GM12878 (cell line): ENCODE measurements at regions of chr17 and their contacts with region 1.

Region 1: DNA sequence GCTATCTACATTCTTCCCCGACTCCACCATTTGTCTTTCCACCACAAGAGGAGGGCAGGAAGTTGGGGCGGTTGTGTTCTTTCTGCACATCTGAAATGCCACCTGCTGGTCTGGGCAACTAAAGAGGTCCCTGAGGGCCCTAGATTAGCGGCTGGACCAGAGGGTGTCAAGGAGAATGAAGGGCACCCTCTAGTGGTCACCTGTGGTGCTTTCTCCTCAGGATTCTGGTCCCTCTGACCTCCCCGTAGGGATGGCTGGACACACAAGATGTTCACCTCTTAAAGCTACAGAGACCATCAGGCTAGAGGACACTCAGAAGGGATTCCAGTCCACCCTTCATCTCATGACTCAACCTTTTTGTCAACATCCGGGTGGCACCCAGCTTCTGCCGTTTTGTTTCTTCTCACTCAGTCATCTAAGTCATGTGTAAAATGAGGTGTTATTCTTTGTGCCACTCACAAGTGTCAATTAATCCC is 2.9 kb upstream of the SCIMP start:
- DNase-seq: peak; percentile 93
- ATAC-seq: peak; percentile 68
- H3K4me3 ChIP-seq: peak overlapping the region; percentile 44; the same call in 1 of the 2 replicates
- H3K27ac ChIP-seq: peak overlapping the region; percentile 66
- H3K4me1 ChIP-seq: peaks cover 43% of the 10 kb centered on the region
- H3K27me3 ChIP-seq: no peaks in the 10 kb centered on the region
- CTCF ChIP-seq: peak; percentile 83 to 95 (median 85)
- EP300 ChIP-seq: peak in 1 of 2 experiments; percentile 56; a peak in 1 of 4 replicates
- POLR2A ChIP-seq: no peak
- RAD21 ChIP-seq: peak; percentile 87

Region 2: DNA sequence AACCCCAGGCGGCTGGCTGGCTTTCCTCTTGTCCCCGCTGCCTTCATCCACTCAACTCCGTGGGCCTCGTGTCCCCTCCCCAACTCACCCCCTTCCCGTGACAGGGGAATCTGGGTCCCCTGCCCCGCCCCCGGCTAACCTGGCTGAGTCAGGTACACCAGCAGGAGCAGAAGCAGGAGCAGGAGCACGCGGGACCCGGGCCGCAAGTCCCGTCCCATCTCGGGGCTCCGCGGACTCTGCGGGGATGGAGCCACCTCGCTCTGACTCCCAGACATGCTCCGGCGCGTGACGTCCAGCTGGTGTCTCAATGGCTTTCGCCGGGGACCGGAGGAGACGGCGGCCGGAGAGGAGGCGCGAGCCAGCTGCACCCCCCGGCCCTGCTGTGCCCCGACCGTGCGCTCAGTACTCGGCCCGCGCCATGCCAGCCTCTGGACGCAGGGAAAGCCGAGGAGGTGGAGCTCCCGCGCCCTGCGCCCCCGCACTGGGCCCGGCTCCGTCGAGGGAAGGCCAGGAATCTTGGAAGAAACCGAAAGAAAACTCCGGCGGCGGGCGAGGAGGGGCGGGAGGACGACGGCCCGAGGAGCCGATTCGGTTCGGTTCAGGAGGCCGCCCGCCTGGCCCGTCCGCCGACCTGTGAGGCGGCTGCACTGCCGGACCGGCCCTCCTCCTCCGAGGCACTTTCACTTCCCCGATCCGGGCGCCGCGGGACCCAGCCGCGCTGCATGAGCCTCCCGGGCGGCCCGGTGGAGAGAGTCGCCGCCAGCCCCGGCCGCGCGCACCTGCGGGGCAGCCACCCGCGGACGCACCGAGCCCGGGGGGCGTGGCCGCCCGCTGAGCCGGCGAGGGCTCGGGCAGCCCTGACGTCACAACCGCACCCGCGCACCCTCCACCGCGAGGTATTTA is 498.2 kb before region 1 on chr17 and contains the starts of genes CXCL16 and ZMYND15:
- CTCF ChIA-PET with region 1: no interaction called
- POLR2A ChIA-PET with region 1: no interaction called
- RAD21 ChIA-PET with region 1: no interaction called
- SMC1A ChIA-PET with region 1: no interaction called
- in situ Hi-C with region 1: no loop called
- intact Hi-C with region 1: no loop called
- DNase-seq: no peak
- ATAC-seq: peak; percentile 92
- H3K4me3 ChIP-seq: peak within 1 kb of the TSS; percentile 72
- H3K27ac ChIP-seq: no peak within 1 kb of the TSS
- H3K4me1 ChIP-seq: peaks cover 3% of the 10 kb centered on the region; the same call in 1 of the 2 replicates
- H3K27me3 ChIP-seq: peaks cover 10 to 15% of the 10 kb centered on the region in 2 experiments
- CTCF ChIP-seq: no peak
- EP300 ChIP-seq: no peak
- POLR2A ChIP-seq: no peak
- RAD21 ChIP-seq: no peak
- polyA plus RNA-seq, gene CXCL16: 0.26 to 0.35 TPM
- polyA plus RNA-seq, gene ZMYND15: not detected

Region 3: DNA sequence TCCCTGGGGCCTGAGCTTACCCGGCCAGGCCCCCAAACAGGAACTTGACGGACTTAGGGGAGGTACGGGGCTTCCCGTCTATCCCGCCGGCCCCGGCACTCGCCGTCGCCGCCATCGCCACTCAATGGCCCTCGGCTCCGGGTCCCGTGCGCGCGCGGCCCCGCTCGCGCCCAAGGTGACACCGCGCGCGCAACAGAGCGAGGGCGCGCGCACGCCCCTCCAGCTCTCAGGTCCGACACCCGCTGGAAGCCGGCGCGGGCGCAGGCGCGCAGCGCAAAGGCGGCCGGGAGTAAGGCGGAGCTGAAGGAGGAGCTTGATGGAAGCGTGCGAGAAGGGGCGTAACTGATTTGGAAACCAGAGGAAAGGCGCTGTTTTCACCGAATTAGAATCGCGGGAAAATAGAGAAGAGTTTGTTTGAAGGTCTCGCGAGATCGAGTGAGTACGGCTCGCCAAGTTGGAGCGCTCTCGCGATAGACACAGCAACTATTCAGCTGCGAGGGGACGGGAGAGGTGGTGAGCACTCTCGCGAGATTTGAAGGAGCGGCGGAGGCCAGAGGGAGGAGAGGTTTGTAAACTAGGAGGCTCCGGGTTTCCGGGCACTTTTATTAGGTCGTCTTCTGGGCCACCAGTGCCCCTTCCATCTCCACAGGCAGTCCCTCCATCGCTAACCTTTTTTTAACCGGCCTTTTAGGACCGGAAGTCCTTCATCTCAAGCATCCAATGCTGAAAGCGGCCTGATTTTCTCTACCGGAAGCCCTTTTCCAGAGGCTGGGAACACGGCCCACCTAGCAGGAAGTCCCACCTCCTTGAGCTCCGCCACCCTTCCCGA is 297.6 kb before region 1 on chr17 and contains the starts of genes RNF167 and SLC25A11:
- CTCF ChIA-PET with region 1: no interaction called
- POLR2A ChIA-PET with region 1: no interaction called
- RAD21 ChIA-PET with region 1: no interaction called
- SMC1A ChIA-PET with region 1: interaction called, 3 read pairs
- in situ Hi-C with region 1: no loop called
- intact Hi-C with region 1: loop called (anchors 5 kb)
- DNase-seq: peak; percentile 100
- ATAC-seq: peak; percentile 83
- H3K4me3 ChIP-seq: peak within 1 kb of the TSS; percentile 92
- H3K27ac ChIP-seq: peak within 1 kb of the TSS; percentile 97
- H3K4me1 ChIP-seq: peaks cover 41% of the 10 kb centered on the region
- H3K27me3 ChIP-seq: no peaks in the 10 kb centered on the region
- CTCF ChIP-seq: no peak
- EP300 ChIP-seq: no peak
- POLR2A ChIP-seq: peak; percentile 88
- RAD21 ChIP-seq: no peak
- polyA plus RNA-seq, gene RNF167: 33.6 to 35.3 TPM
- polyA plus RNA-seq, gene SLC25A11: 5.8 to 10.9 TPM

Region 4: DNA sequence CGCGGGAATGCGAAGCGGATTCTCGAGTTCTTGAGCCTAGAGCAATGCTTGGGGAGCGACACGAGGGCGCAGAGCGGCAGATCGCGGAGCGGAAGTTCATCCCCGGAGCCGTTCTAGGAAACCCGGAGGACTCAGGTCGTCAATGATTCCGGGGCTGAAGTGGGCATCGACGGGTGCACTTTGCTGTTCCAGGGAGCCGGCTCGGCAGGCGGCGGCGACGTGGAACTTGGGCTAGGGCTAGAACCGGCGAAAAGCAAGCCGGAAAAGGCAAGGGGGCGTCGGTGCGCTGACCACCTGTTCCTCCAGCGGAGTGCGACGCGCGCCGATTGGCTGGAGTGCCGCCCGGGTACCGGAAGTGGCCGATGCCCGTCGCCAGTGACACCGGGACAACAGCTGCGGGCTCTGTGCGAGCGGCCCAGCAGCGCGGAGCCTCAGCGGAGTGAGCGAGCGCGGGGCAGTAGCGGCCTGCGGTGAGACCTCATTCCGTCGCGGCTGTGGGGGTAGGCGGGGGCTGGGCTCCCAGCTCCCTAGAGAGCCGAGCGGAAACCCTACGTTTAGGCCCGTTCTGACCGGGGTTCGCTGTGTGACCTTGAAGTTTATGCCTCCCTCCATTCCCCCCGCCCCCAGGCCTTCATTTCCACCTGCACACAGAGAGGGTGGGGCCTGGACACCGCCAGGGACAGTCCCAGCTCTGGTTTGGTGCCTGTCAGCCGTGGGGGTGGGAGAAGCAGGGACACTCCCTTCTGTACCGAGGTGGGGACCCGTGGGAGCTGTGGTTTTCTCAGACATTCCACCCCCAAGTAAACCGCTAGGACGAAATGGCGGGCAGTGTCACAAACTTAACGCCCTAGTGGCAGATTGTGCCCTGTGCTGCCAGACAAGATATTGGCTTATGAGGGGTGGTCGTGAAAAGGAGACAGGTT is 159.2 kb before region 1 on chr17 and contains the start of gene ZFP3:
- CTCF ChIA-PET with region 1: no interaction called
- POLR2A ChIA-PET with region 1: interaction called, 5 read pairs
- RAD21 ChIA-PET with region 1: no interaction called
- SMC1A ChIA-PET with region 1: interaction called, 3 read pairs
- in situ Hi-C with region 1: no loop called
- intact Hi-C with region 1: loop called (anchors 5 kb)
- DNase-seq: peak; percentile 56
- ATAC-seq: peak; percentile 98
- H3K4me3 ChIP-seq: peak within 1 kb of the TSS; percentile 67
- H3K27ac ChIP-seq: peak within 1 kb of the TSS; percentile 66
- H3K4me1 ChIP-seq: peaks cover 3% of the 10 kb centered on the region
- H3K27me3 ChIP-seq: no peaks in the 10 kb centered on the region
- CTCF ChIP-seq: peak in 2 of 3 experiments; percentile 7 to 16; a peak in 1 of 6 replicates
- EP300 ChIP-seq: peak in 1 of 2 experiments; percentile 46; a peak in 1 of 4 replicates
- POLR2A ChIP-seq: peak; percentile 94
- RAD21 ChIP-seq: no peak
- polyA plus RNA-seq, gene ZFP3: 0.37 to 0.39 TPM

Region 5: DNA sequence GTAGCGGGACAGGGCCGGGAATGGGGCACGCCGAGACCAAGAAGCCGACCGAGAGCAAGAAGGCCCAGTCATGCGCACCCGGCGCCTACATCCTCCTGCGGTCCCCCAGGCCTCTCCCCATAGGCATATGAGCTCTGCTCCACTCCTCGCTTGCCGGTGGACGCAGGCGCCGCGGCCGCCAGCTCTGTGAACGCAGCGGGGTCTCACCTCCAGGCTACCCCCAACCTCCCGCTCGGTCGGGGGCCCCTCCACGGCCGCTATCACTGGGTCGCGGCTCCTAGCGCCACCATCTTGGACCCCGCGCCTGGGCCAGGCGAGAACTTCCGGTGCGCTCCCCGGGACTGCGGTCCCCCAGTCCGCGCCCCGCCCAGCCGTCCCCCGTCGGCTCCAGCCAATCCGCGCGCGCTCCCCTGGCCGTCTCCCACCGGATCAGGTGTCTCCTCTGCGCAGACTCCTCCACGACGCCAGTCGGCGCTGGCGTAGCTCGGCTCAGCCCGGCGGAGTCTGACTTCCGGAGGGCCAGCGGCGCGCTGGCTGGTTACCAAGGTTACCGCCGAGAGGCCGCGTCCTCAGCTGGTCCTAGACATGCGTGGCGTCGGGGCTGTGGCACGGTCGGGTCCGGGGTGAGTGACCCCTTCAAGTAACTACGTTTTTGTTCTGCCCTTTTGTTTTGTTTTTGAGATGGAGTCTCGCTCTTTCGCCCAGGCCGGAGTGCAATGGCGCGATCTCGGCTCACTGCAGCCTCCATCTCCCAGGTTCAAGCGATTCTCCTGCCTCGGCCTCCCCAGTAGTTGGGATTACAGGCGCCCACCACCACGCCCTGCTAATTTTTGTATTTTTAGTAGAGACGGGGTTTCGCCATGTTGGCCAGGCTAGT is 45.8 kb before region 1 on chr17 and contains the start of gene ZNF594:
- CTCF ChIA-PET with region 1: interaction called, 209 read pairs
- POLR2A ChIA-PET with region 1: interaction called, 98 read pairs
- RAD21 ChIA-PET with region 1: interaction called, 125 read pairs
- SMC1A ChIA-PET with region 1: interaction called, 157 read pairs
- in situ Hi-C with region 1: loop called (anchors 5 kb)
- intact Hi-C with region 1: no loop called
- DNase-seq: peak; percentile 81
- ATAC-seq: peak; percentile 100
- H3K4me3 ChIP-seq: peak within 1 kb of the TSS; percentile 68
- H3K27ac ChIP-seq: peak within 1 kb of the TSS; percentile 88
- H3K4me1 ChIP-seq: peaks cover 3% of the 10 kb centered on the region; the same call in 1 of the 2 replicates
- H3K27me3 ChIP-seq: no peaks in the 10 kb centered on the region
- CTCF ChIP-seq: peak; percentile 82 to 92 (median 83)
- EP300 ChIP-seq: 0 out of 4 replicates have a peak, but pooled peaks of 1 of the 2 experiments have one; percentile 14
- POLR2A ChIP-seq: peak; percentile 97
- RAD21 ChIP-seq: peak; percentile 50
- polyA plus RNA-seq, gene ZNF594: 0.98 to 1.7 TPM

Region 6: DNA sequence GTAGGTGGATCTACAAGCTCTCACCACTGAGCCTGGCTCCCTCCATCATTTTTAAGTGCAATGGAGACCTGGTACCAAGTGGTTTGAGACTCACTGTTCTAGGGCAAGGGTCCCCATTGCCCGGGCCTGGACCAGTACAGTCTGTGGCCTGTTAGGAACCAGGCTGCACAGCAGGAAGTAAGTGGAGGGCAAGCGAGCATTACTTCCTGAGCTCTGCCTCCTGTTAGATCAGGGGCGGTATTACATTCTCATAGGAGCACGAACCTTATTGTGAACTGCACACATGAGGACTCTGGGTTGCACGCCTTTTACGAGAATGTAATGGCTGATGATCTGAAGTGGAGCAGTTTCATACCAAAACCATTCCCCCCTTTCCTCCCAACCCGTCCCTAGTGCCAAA is 39.1 kb before region 1 on chr17:
- CTCF ChIA-PET with region 1: interaction called, 209 read pairs
- POLR2A ChIA-PET with region 1: interaction called, 98 read pairs
- RAD21 ChIA-PET with region 1: interaction called, 125 read pairs
- SMC1A ChIA-PET with region 1: interaction called, 157 read pairs
- in situ Hi-C with region 1: loop called (anchors 5 kb)
- intact Hi-C with region 1: loop called (anchors 1 kb)
- DNase-seq: no peak
- ATAC-seq: peak; percentile 69
- H3K4me3 ChIP-seq: no peak overlapping the region
- H3K27ac ChIP-seq: peak overlapping the region; percentile 89
- H3K4me1 ChIP-seq: peaks cover 31% of the 10 kb centered on the region
- H3K27me3 ChIP-seq: no peaks in the 10 kb centered on the region
- CTCF ChIP-seq: no peak; a peak in 1 of 6 replicates
- EP300 ChIP-seq: no peak
- POLR2A ChIP-seq: peak; percentile 27; the same call in 1 of the 2 replicates
- RAD21 ChIP-seq: no peak

Region 7: GRCh38 chr17:5210614-5211252 is 26.8 kb before region 1 on chr17:
- CTCF ChIA-PET with region 1: interaction called, 10 read pairs
- POLR2A ChIA-PET with region 1: interaction called, 6 read pairs
- RAD21 ChIA-PET with region 1: interaction called, 5 read pairs
- SMC1A ChIA-PET with region 1: interaction called, 6 read pairs
- in situ Hi-C with region 1: no loop called
- intact Hi-C with region 1: no loop called
- DNase-seq: peak; percentile 73
- ATAC-seq: peak; percentile 70
- H3K4me3 ChIP-seq: no peak overlapping the region
- H3K27ac ChIP-seq: peak overlapping the region; percentile 88
- H3K4me1 ChIP-seq: peaks cover 53% of the 10 kb centered on the region
- H3K27me3 ChIP-seq: no peaks in the 10 kb centered on the region
- CTCF ChIP-seq: no peak
- EP300 ChIP-seq: peak in 1 of 2 experiments; percentile 63; a peak in 2 of 4 replicates
- POLR2A ChIP-seq: no peak
- RAD21 ChIP-seq: no peak

Region 8: GRCh38 chr17:5226940-5227878 is 10.4 kb before region 1 on chr17:
- CTCF ChIA-PET with region 1: interaction called, 84 read pairs
- POLR2A ChIA-PET with region 1: interaction called, 115 read pairs
- RAD21 ChIA-PET with region 1: interaction called, 115 read pairs
- SMC1A ChIA-PET with region 1: interaction called, 108 read pairs
- in situ Hi-C with region 1: no loop called
- intact Hi-C with region 1: loop called (anchors 1 kb)
- DNase-seq: peak; percentile 92
- ATAC-seq: peak; percentile 67
- H3K4me3 ChIP-seq: peak overlapping the region; percentile 68
- H3K27ac ChIP-seq: peak overlapping the region; percentile 100
- H3K4me1 ChIP-seq: peaks cover 76% of the 10 kb centered on the region
- H3K27me3 ChIP-seq: no peaks in the 10 kb centered on the region
- CTCF ChIP-seq: no peak
- EP300 ChIP-seq: peak; percentile 83 to 86
- POLR2A ChIP-seq: peak; percentile 70
- RAD21 ChIP-seq: no peak